ENCODE measurements at regions of chr12 and their contacts with region 1.

Region 1: GRCh38 chr12:51531978-51532497 is 59.0 kb upstream of the SCN8A start:
- DNase-seq: peak; percentile 52 to 85 (median 74)
- H3K4me3 ChIP-seq: peak overlapping the region in 2 of 59 donors; percentile 6 to 15
- H3K27ac ChIP-seq: no peak overlapping the region
- H3K27me3 ChIP-seq: peaks cover 0 to under 1% (median 0%) of the 10 kb centered on the region in 45 donors
- CTCF ChIP-seq: peak; percentile 59 to 94 (median 86)

Region 2: GRCh38 chr12:51823875-51824565 is 292.0 kb after region 1 on chr12:
- intact Hi-C with region 1: loop called (anchors 5 kb)
- DNase-seq: peak in 6 of 10 donors; percentile 39 to 69 (median 53)
- H3K4me3 ChIP-seq: no peak overlapping the region
- H3K27ac ChIP-seq: peak overlapping the region in 2 of 59 donors; percentile 10 to 18
- H3K27me3 ChIP-seq: no peaks in the 10 kb centered on the region
- CTCF ChIP-seq: peak in 55 of 56 donors; percentile 46 to 81 (median 65)